Activated CD8-positive, alpha-beta T cell treated with anti-CD3 and anti-CD28 coated beads, Interleukin-2, amount 10 ng/mL, durations not matched to agents 7 days and 5 days (primary cell): ENCODE measurements at regions of chr4 and their contacts with region 1.

Region 1: GRCh38 chr4:56799824-56800756 is 21.4 kb downstream of the SPINK2 start:
- DNase-seq: peak; percentile 91
- ATAC-seq: peak; percentile 95
- H3K4me3 Mint-ChIP-seq: peak overlapping the region; percentile 83
- H3K27ac Mint-ChIP-seq: peak overlapping the region; percentile 68
- H3K4me1 Mint-ChIP-seq: peaks cover 40% of the 10 kb centered on the region
- H3K27me3 Mint-ChIP-seq: peaks cover 8% of the 10 kb centered on the region

Region 2: GRCh38 chr4:56530269-56531148 is 269.6 kb before region 1 on chr4:
- CTCF ChIA-PET with region 1: no interaction called
- POLR2A ChIA-PET with region 1: no interaction called
- DNase-seq: peak; percentile 85
- ATAC-seq: peak; percentile 98
- H3K4me3 Mint-ChIP-seq: peak overlapping the region; percentile 44
- H3K27ac Mint-ChIP-seq: no peak overlapping the region
- H3K4me1 Mint-ChIP-seq: no peaks in the 10 kb centered on the region
- H3K27me3 Mint-ChIP-seq: peaks cover 23% of the 10 kb centered on the region

Region 3: DNA sequence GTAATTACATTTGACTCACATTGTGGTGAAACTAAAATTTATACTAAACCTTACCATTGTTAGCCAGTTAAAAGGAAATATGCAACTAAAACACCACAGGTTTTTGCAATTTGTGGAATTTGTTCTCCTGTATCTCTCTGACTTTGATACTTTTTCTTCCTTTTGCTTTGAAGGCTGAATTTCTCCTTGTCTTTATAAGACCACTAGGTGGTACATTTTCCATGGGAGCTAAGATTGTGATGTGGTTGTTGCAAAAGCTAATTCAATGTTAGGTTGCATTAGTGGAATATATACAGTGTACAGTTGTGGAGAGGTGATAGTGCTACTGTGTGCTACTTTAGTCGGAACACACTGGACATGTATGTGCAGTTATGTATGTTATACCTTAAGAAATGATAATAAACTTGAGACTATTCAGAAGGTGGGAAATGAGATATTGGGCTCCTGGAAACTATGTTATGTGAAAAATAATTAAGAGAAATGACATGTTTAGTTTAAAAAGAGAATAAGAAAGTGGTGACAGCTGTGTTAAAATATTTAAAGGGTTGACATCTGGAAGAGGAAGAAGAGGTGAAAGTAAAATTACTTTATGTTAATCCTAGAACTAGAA is 224.2 kb before region 1 on chr4:
- CTCF ChIA-PET with region 1: interaction called, 16 read pairs
- POLR2A ChIA-PET with region 1: no interaction called
- DNase-seq: no peak
- ATAC-seq: no peak
- H3K4me3 Mint-ChIP-seq: no peak overlapping the region
- H3K27ac Mint-ChIP-seq: no peak overlapping the region
- H3K4me1 Mint-ChIP-seq: peaks cover 9% of the 10 kb centered on the region
- H3K27me3 Mint-ChIP-seq: peaks cover 6% of the 10 kb centered on the region

Region 4: GRCh38 chr4:56626963-56627362 is 173.1 kb before region 1 on chr4:
- CTCF ChIA-PET with region 1: interaction called, 12 read pairs
- POLR2A ChIA-PET with region 1: no interaction called
- DNase-seq: no peak
- ATAC-seq: no peak
- H3K4me3 Mint-ChIP-seq: no peak overlapping the region
- H3K27ac Mint-ChIP-seq: no peak overlapping the region
- H3K4me1 Mint-ChIP-seq: peaks cover 8% of the 10 kb centered on the region
- H3K27me3 Mint-ChIP-seq: peaks cover 7% of the 10 kb centered on the region

Region 5: GRCh38 chr4:56668298-56668697 is 131.8 kb before region 1 on chr4:
- CTCF ChIA-PET with region 1: interaction called, 20 read pairs
- POLR2A ChIA-PET with region 1: no interaction called
- DNase-seq: no peak
- ATAC-seq: no peak
- H3K4me3 Mint-ChIP-seq: no peak overlapping the region
- H3K27ac Mint-ChIP-seq: no peak overlapping the region
- H3K4me1 Mint-ChIP-seq: no peaks in the 10 kb centered on the region
- H3K27me3 Mint-ChIP-seq: peaks cover 22% of the 10 kb centered on the region

Region 6: DNA sequence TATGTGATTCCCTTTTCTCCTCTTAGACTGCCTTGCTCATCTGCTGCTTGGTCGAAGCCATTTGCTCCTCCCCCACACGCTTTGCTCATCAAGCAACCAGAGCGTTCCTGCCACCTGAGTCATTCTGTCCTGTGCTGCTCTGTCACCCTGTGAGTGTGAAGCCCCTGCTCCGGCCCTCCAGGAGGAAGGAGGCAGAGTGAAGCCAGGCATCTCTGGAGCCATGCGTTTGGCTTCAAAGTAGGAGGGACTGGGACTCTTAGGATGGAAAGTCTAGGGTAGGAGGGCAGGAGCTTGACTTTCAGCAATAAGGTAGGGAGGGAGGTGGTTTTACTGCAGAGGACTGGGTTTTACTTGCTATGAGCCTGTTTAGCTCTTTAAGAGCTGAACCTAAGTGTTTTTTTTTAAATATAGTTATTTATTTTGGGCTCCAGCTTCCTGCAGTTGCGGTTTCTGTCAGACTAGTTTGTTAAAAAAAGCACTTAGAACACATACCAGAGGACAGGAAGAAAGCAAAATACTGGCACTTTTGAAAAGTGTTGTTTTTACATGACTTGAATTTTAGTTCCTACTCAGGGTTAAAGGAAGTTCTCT is 42.2 kb before region 1 on chr4:
- CTCF ChIA-PET with region 1: interaction called, 15 read pairs
- POLR2A ChIA-PET with region 1: interaction called, 3 read pairs
- DNase-seq: peak; percentile 82
- ATAC-seq: peak; percentile 94
- H3K4me3 Mint-ChIP-seq: peak overlapping the region; percentile 62
- H3K27ac Mint-ChIP-seq: peak overlapping the region; percentile 98
- H3K4me1 Mint-ChIP-seq: peaks cover 37% of the 10 kb centered on the region
- H3K27me3 Mint-ChIP-seq: peaks cover 6% of the 10 kb centered on the region

Region 7: DNA sequence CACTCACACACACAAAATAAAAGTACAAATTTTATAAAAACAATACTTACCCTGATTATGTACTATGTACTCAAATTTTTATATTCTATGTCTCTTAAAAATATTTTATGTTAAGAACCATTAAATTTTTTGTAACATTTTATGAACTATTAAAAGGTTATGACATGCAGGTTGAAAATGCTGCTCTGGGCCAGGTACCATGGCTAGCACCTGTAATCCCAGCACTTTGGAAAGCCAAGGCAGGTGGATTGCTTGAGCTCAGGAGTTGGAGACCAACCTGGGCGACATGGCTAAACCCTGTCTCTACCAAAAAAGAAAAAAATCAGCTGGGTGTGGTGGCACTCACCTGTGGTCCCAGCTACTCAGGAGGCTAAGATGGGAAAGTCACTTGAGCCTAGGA is 50.8 kb after region 1 on chr4:
- CTCF ChIA-PET with region 1: no interaction called
- POLR2A ChIA-PET with region 1: no interaction called
- DNase-seq: no peak
- ATAC-seq: no peak
- H3K4me3 Mint-ChIP-seq: no peak overlapping the region
- H3K27ac Mint-ChIP-seq: no peak overlapping the region
- H3K4me1 Mint-ChIP-seq: no peaks in the 10 kb centered on the region
- H3K27me3 Mint-ChIP-seq: peaks cover 2% of the 10 kb centered on the region